ENCODE measurements at regions of chr19 and their contacts with region 1.

Region 1: GRCh38 chr19:10870955-10871603 is at the start of gene CARM1:
- DNase-seq: peak; percentile 100
- H3K4me3 ChIP-seq: peak within 1 kb of the TSS; percentile 83 to 89 (median 86)
- H3K27ac ChIP-seq: peak within 1 kb of the TSS; percentile 82 to 91 (median 83)
- H3K4me1 ChIP-seq: peaks cover 8 to 38% (median 35%) of the 10 kb centered on the region in 4 donors
- H3K27me3 ChIP-seq: no peaks in the 10 kb centered on the region
- CTCF ChIP-seq: peak in 5 of 7 experiments; percentile 13 to 88 (median 49)
- EP300 ChIP-seq: no peak
- POLR2A ChIP-seq: no peak
- total RNA-seq, gene CARM1: 5.2 to 21.0 (median 15.6) TPM

Region 2: GRCh38 chr19:10780368-10780767 is 90.7 kb before region 1 on chr19:
- intact Hi-C with region 1: no loop called
- DNase-seq: peak in 1 of 2 donors; percentile 46
- H3K4me3 ChIP-seq: no peak overlapping the region
- H3K27ac ChIP-seq: peak overlapping the region; percentile 5 to 87 (median 62)
- H3K4me1 ChIP-seq: peaks cover 0 to 26% (median 0%) of the 10 kb centered on the region in 4 donors
- H3K27me3 ChIP-seq: no peaks in the 10 kb centered on the region
- CTCF ChIP-seq: no peak
- EP300 ChIP-seq: no peak
- POLR2A ChIP-seq: no peak

Region 3: GRCh38 chr19:10812902-10813404 is 58.1 kb before region 1 on chr19:
- intact Hi-C with region 1: no loop called
- DNase-seq: peak; percentile 33 to 52
- H3K4me3 ChIP-seq: no peak overlapping the region
- H3K27ac ChIP-seq: peak overlapping the region in 4 of 5 donors; percentile 34 to 78 (median 61)
- H3K4me1 ChIP-seq: peaks cover 0 to 63% (median 7%) of the 10 kb centered on the region in 4 donors
- H3K27me3 ChIP-seq: no peaks in the 10 kb centered on the region
- CTCF ChIP-seq: no peak
- EP300 ChIP-seq: no peak
- POLR2A ChIP-seq: no peak

Region 4: DNA sequence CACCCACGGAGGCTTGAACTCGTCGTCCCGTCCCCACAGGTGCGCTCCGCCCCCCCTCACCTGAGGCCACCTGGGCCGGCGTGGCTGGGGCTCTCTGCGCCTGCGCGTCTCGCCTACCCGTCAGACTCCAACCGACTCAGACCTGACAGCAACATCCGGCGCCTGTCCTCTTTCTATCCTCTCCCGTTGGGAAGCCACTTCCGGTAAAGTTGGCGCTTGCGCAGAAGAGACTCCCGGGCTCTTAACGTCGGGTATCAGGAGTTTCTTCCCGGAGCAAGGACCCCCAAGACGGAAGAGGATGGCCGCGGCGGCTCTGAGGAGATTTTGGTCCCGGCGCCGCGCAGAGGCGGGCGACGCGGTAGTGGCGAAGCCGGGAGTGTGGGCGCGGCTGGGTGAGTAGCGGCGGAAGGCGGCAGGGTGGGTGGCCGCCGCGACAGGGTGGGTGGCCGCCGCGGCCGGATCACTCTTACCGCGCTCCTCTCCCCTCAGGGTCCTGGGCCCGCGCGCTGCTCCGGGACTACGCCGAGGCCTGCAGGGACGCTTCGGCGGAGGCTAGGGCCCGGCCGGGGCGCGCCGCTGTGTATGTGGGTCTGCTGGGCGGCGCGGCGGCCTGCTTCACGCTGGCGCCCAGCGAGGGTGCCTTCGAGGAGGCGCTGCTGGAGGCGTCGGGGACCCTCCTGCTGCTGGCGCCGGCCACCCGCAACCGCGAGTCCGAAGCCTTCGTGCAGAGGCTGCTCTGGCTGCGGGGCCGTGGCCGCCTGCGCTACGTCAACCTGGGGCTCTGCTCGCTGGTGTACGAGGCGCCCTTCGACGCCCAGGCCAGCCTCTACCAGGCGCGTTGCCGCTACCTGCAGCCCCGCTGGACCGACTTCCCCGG is 57.7 kb after region 1 on chr19 and contains the starts of genes TIMM29 and YIPF2:
- intact Hi-C with region 1: loop called (anchors 10 kb)
- DNase-seq: peak; percentile 98 to 99
- H3K4me3 ChIP-seq: peak within 1 kb of the TSS; percentile 69 to 100 (median 98)
- H3K27ac ChIP-seq: peak within 1 kb of the TSS; percentile 83 to 94 (median 89)
- H3K4me1 ChIP-seq: peaks cover 19 to 58% (median 44%) of the 10 kb centered on the region in 4 donors
- H3K27me3 ChIP-seq: no peaks in the 10 kb centered on the region
- CTCF ChIP-seq: no peak
- EP300 ChIP-seq: no peak
- POLR2A ChIP-seq: no peak
- total RNA-seq, gene TIMM29: 9.8 to 294 (median 34.4) TPM
- total RNA-seq, gene YIPF2: 0.58 to 72.3 (median 52.6) TPM

Measured in stomach (tissue), 19 donors.